AG04449 (cell line): ENCODE measurements at regions of chr11 and their contacts with region 1.

Region 1: GRCh38 chr11:70322666-70323065 is 52.2 kb downstream of the PPFIA1 start:
- DNase-seq: no peak
- H3K4me3 ChIP-seq: no peak overlapping the region
- CTCF ChIP-seq: no peak

Region 2: GRCh38 chr11:69554894-69555293 is 767.8 kb before region 1 on chr11:
- CTCF ChIA-PET with region 1: no interaction called
- POLR2A ChIA-PET with region 1: no interaction called
- DNase-seq: no peak
- H3K4me3 ChIP-seq: no peak overlapping the region
- CTCF ChIP-seq: no peak

Region 3: GRCh38 chr11:70247464-70248255 is 75.0 kb before region 1 on chr11:
- CTCF ChIA-PET with region 1: no interaction called
- POLR2A ChIA-PET with region 1: no interaction called
- DNase-seq: no peak
- H3K4me3 ChIP-seq: no peak overlapping the region
- CTCF ChIP-seq: no peak

Region 4: DNA sequence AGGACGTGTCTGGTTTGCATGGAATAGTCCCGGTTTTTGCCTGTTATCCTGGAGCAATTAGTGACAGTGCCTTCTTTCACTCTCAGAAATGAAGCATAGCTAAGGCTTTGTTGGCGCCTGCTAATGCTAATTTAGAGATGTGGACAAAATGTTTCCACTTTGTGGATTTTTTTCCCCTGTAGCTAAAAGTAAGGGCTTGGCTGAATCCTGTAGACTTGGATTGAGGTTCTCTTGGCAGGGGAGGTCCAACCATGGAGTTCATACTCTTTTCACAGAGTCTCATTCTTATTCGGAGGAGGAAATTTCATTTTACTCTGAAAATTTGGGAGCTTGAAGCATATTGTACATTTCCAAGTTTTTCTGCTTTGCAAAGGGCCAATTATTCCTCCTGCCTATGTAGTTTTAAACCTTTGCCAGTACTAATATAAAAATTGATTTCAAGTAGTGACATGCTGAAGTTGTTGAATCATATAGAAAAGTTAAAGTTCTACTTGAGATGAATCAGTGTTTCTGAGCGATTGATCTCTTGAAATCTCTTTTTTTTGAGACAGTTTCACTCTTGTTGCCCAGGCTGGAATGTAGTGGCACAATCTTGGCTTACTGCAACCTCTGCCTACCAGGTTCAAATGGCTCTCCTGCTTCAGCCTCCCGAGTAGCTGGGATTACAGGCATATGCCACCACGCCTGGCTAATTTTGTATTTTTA is 32.2 kb before region 1 on chr11:
- CTCF ChIA-PET with region 1: no interaction called
- POLR2A ChIA-PET with region 1: no interaction called
- DNase-seq: no peak
- H3K4me3 ChIP-seq: no peak overlapping the region
- CTCF ChIP-seq: no peak

Region 5: GRCh38 chr11:70333261-70333660 is 10.6 kb after region 1 on chr11:
- CTCF ChIA-PET with region 1: interaction called, 10 read pairs
- POLR2A ChIA-PET with region 1: no interaction called
- DNase-seq: no peak
- H3K4me3 ChIP-seq: no peak overlapping the region
- CTCF ChIP-seq: no peak